ENCODE measurements at regions of chr6 and their contacts with region 1.

Region 1: DNA sequence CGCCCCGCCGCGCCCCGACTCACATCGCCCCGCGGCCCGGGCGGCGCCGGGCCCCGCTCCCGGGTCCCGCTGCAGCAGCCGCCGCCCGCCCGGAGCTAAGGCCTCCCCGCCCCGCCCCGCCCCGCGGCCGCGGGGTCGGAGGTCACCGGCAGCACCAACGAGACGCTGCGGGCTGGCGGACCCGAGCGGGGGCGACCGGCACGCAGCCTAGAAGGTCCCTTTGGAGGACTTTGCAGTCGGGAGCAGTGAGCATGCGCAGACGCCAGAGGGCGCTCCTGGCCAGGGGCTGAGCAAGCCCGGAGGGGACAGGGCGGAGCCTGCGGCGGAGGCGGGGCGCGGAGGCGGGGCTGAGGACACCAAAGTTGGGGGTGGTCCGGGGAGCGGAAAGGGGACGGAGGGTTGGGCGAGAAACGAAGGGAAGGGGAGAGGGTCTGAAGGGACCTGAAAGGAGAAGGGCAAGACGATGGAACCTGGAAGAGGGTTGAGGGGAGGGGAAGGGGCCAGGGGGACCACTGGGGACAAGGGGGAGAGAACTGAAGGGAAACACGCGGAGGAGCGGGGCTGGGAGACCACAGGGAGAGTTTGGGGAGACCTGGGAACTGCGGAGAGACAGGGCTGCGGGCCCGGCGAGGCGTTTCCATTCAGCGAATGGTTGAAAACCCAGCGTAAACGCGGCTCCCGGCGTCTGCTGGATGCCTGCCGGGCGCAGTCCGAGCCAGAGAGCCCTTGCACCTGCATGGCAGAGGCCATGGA is at the start of gene FRS3:
- DNase-seq: peak; percentile 99
- H3K4me3 Mint-ChIP-seq: peak within 1 kb of the TSS; percentile 94
- H3K27ac Mint-ChIP-seq: peak within 1 kb of the TSS; percentile 83
- H3K4me1 Mint-ChIP-seq: peaks cover 19% of the 10 kb centered on the region
- H3K27me3 Mint-ChIP-seq: peaks cover 14% of the 10 kb centered on the region
- total RNA-seq, gene FRS3: 5.2 and 5.3 TPM in 2 replicates

Region 2: DNA sequence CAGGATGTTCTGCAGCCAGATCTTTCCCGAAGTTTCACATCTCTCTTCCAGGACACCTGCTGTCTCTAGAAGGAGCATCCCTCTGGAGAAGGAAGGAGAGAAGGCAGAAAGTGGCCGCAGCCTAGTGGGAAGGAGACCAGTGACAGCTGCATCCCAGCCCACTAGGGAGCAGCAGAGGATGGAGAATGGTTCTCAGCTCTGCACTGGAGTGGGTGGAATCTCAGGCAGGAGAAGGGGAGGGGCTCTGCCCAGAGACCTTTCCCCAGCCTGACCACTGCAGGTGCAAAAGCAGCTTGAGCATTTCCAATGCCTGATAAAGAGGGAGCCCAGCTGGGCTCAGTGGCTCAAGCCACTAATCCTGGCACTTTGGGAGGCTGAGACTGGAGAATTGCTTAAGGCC is 412.3 kb before region 1 on chr6:
- intact Hi-C with region 1: loop called (anchors 1 kb)
- DNase-seq: no peak
- H3K4me3 Mint-ChIP-seq: no peak overlapping the region
- H3K27ac Mint-ChIP-seq: no peak overlapping the region
- H3K4me1 Mint-ChIP-seq: peaks cover 22% of the 10 kb centered on the region
- H3K27me3 Mint-ChIP-seq: peaks cover 68% of the 10 kb centered on the region

Region 3: GRCh38 chr6:41463062-41463930 is 316.7 kb before region 1 on chr6:
- intact Hi-C with region 1: no loop called
- DNase-seq: no peak
- H3K4me3 Mint-ChIP-seq: no peak overlapping the region
- H3K27ac Mint-ChIP-seq: no peak overlapping the region
- H3K4me1 Mint-ChIP-seq: no peaks in the 10 kb centered on the region
- H3K27me3 Mint-ChIP-seq: peaks cover 53% of the 10 kb centered on the region

Region 4: GRCh38 chr6:41683510-41684310 is 96.3 kb before region 1 on chr6:
- intact Hi-C with region 1: loop called (anchors 2 kb)
- DNase-seq: peak; percentile 71
- H3K4me3 Mint-ChIP-seq: peak overlapping the region; percentile 75
- H3K27ac Mint-ChIP-seq: peak overlapping the region; percentile 73
- H3K4me1 Mint-ChIP-seq: peaks cover 6% of the 10 kb centered on the region
- H3K27me3 Mint-ChIP-seq: no peaks in the 10 kb centered on the region

Region 5: GRCh38 chr6:41801380-41801779 is 21.4 kb after region 1 on chr6:
- intact Hi-C with region 1: no loop called
- DNase-seq: no peak
- H3K4me3 Mint-ChIP-seq: no peak overlapping the region
- H3K27ac Mint-ChIP-seq: no peak overlapping the region
- H3K4me1 Mint-ChIP-seq: no peaks in the 10 kb centered on the region
- H3K27me3 Mint-ChIP-seq: no peaks in the 10 kb centered on the region

Region 6: GRCh38 chr6:41895300-41896233 is 115.6 kb after region 1 on chr6 and contains the start of gene USP49:
- intact Hi-C with region 1: loop called (anchors 1 kb)
- DNase-seq: peak; percentile 84
- H3K4me3 Mint-ChIP-seq: no peak within 1 kb of the TSS
- H3K27ac Mint-ChIP-seq: peak within 1 kb of the TSS; percentile 97
- H3K4me1 Mint-ChIP-seq: peaks cover 10% of the 10 kb centered on the region
- H3K27me3 Mint-ChIP-seq: no peaks in the 10 kb centered on the region
- total RNA-seq, gene USP49: 4.8 and 5.3 TPM in 2 replicates

Region 7: GRCh38 chr6:41941280-41942066 is 161.5 kb after region 1 on chr6 and contains the start of gene CCND3:
- intact Hi-C with region 1: loop called (anchors 1 kb)
- DNase-seq: peak; percentile 89
- H3K4me3 Mint-ChIP-seq: peak within 1 kb of the TSS; percentile 99
- H3K27ac Mint-ChIP-seq: peak within 1 kb of the TSS; percentile 94
- H3K4me1 Mint-ChIP-seq: peaks cover 43% of the 10 kb centered on the region
- H3K27me3 Mint-ChIP-seq: no peaks in the 10 kb centered on the region
- total RNA-seq, gene CCND3: 351 and 356 TPM in 2 replicates

Region 8: GRCh38 chr6:42050266-42051032 is 270.5 kb after region 1 on chr6 and contains the start of gene TAF8:
- intact Hi-C with region 1: loop called (anchors 1 kb)
- DNase-seq: peak; percentile 87
- H3K4me3 Mint-ChIP-seq: peak within 1 kb of the TSS; percentile 93
- H3K27ac Mint-ChIP-seq: peak within 1 kb of the TSS; percentile 92
- H3K4me1 Mint-ChIP-seq: peaks cover 58% of the 10 kb centered on the region
- H3K27me3 Mint-ChIP-seq: no peaks in the 10 kb centered on the region
- total RNA-seq, gene TAF8: 36.7 and 38.3 TPM in 2 replicates

Region 9: GRCh38 chr6:42217519-42218367 is 437.8 kb after region 1 on chr6 and contains the start of gene MRPS10:
- intact Hi-C with region 1: loop called (anchors 1 kb)
- DNase-seq: peak; percentile 89
- H3K4me3 Mint-ChIP-seq: peak within 1 kb of the TSS; percentile 96
- H3K27ac Mint-ChIP-seq: peak within 1 kb of the TSS; percentile 89
- H3K4me1 Mint-ChIP-seq: peaks cover 20% of the 10 kb centered on the region
- H3K27me3 Mint-ChIP-seq: no peaks in the 10 kb centered on the region
- total RNA-seq, gene MRPS10: 48.8 and 49.7 TPM in 2 replicates